Cardiac septum (tissue), 1 donor: ENCODE measurements at regions of chr2 and their contacts with region 1.

Region 1: DNA sequence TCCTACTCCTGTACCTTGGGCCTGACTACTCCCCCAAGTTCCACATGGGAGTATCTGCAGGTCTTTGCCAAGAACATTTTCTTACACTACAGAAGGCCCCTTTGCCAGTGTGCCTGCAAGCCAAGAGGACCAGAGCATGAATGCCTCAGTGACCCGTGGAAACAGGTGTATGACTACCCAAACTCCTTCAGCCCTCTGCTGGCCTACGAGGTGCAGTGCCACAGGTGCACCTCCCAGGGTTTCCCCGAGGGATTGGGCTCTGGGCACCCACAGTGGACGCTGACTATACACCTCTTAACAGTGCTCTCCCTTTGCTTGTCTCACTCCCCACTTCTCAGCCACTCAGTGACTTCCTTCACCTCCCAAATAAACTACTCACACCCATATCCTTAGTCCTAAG is 91.4 kb downstream of the COL6A3 start:
- DNase-seq: no peak

Region 2: DNA sequence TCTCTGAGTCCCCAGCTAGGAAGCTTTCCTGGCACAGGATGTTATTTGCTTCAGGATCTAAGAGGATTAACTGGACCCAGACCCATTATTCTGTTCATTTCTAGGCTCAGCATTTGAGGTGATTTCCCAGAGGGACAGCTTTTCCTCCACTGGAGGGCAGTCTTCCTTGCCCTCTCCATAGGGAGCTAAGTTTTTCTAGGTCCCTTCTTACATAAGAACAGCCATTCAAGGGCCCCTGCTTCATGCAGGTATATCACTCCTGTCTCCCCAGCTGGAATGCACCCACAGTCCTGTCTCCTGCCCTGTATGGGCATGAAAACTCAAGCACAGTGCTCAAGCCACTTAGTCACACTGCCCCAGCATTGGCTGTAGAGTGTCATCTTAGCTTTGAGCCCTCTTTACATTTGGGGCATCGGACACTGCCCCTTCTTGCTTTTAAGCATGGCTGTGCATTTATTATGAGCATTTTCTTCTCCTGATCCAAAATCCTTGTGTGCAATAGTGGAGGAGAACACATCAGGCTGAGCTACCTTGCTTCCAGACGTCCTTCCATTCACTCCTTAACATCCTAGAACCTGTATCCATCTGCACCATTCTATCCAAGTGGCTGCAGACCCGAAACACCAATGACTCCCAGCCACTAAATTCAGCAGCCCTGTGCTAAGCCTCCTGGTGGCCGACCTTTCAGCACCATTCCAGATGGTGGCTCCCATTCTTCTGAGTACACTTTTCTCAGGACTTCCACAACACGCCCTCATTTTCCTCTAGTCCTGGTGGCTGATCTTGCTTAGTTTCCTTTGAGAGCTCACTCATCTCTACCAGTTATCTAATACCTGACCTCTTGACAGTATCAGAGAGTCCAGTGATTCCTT is 156.9 kb before region 1 on chr2:
- intact Hi-C with region 1: loop called (anchors 2 kb)
- DNase-seq: no peak

Region 3: DNA sequence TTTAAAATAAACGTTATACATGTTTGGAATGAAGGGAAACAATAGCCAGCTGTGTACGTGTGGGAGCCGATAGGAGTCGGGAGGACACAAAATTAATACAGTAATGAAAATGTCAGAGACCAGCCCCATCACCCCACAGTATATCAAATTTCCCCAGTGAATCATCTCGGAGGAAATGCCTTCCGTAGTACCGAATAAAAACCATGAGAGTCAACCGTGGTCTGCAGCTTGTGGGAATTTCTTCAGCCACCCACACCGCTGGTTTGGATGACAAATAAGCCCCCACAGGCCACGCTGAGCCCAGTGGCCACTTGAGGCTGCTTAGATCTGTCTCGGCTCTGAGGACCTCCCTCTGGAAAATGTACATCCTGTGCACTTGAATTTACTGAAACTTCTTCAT is 42.3 kb before region 1 on chr2:
- intact Hi-C with region 1: loop called (anchors 5 kb)
- DNase-seq: no peak

Region 4: GRCh38 chr2:237408335-237409000 is 85.9 kb after region 1 on chr2:
- intact Hi-C with region 1: loop called (anchors 5 kb)
- DNase-seq: no peak

Region 5: GRCh38 chr2:237474931-237475703 is 152.6 kb after region 1 on chr2:
- intact Hi-C with region 1: loop called (anchors 10 kb)
- DNase-seq: peak; percentile 89

Region 6: GRCh38 chr2:237563816-237564215 is 241.3 kb after region 1 on chr2:
- intact Hi-C with region 1: no loop called
- DNase-seq: no peak